ENCODE measurements at regions of chr3 and their contacts with region 1.

Region 1: GRCh38 chr3:171162986-171163723 is 136.6 kb upstream of the SLC2A2 start:
- DNase-seq: no peak
- ATAC-seq: no peak

Region 2: GRCh38 chr3:171049861-171050444 is 113.2 kb before region 1 on chr3:
- intact Hi-C with region 1: loop called in 1 of 2 experiments (anchors 10 kb)
- DNase-seq: peak; percentile 51
- ATAC-seq: peak; percentile 72 to 76

Region 3: GRCh38 chr3:171236265-171236994 is 73.3 kb after region 1 on chr3:
- intact Hi-C with region 1: no loop called
- DNase-seq: no peak
- ATAC-seq: peak in 1 of 2 donors; percentile 14